IMR-90 (cell line): ENCODE measurements at regions of chr1 and their contacts with region 1.

Region 1: GRCh38 chr1:94463765-94464330 is 45.7 kb downstream of the ABCD3 start:
- DNase-seq: peak; percentile 71
- ATAC-seq: peak; percentile 86
- H3K4me3 ChIP-seq: no peak overlapping the region
- H3K27ac ChIP-seq: no peak overlapping the region
- H3K4me1 ChIP-seq: no peaks in the 10 kb centered on the region; the same call in 1 of the 2 replicates
- H3K27me3 ChIP-seq: no peaks in the 10 kb centered on the region
- CTCF ChIP-seq: peak; percentile 74
- POLR2A ChIP-seq: no peak
- RAD21 ChIP-seq: peak; percentile 85

Region 2: GRCh38 chr1:94025383-94026340 is 438.2 kb before region 1 on chr1:
- CTCF ChIA-PET with region 1: interaction called, 4 read pairs
- POLR2A ChIA-PET with region 1: no interaction called
- dilution Hi-C with region 1: no loop called
- in situ Hi-C with region 1: loop called (anchors 25 kb)
- intact Hi-C with region 1: loop called (anchors 1 kb)
- DNase-seq: peak; percentile 79
- ATAC-seq: peak; percentile 50
- H3K4me3 ChIP-seq: no peak overlapping the region
- H3K27ac ChIP-seq: no peak overlapping the region
- H3K4me1 ChIP-seq: peaks cover 15% of the 10 kb centered on the region
- H3K27me3 ChIP-seq: no peaks in the 10 kb centered on the region
- CTCF ChIP-seq: peak; percentile 83
- POLR2A ChIP-seq: no peak
- RAD21 ChIP-seq: peak; percentile 81

Region 3: DNA sequence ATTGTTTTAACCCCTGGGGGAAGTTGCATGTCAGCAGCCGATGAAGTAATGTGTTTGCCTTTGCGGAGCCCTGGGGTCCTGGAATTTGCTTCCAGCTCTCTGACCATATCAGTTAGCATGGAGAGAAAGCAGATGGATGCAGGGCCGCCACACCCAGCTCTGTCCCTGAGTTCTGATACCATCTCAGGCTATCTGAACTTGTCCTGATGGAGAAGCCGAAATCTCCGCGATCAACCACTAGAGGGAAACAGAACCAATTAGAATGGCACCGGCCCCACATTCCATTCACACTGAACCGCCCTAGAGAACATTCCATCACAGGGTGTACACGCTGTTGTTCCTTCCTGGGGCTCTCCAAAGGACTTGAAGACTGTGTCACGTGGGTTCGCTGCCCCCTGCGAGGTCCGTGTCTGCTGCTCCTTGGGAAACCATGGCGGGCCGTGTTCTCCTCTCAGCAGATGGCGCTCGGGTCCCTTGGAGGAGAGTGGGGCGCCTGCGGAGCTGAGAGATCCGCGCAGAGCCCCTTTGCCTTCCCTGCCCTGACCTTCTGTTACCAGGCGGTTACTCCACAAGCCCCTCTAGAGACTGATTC is 418.3 kb before region 1 on chr1:
- CTCF ChIA-PET with region 1: interaction called, 6 read pairs
- POLR2A ChIA-PET with region 1: no interaction called
- dilution Hi-C with region 1: no loop called
- in situ Hi-C with region 1: loop called (anchors 25 kb)
- intact Hi-C with region 1: no loop called
- DNase-seq: peak; percentile 92
- ATAC-seq: peak; percentile 90
- H3K4me3 ChIP-seq: no peak overlapping the region
- H3K27ac ChIP-seq: peak overlapping the region; percentile 19
- H3K4me1 ChIP-seq: peaks cover 13% of the 10 kb centered on the region; the same call in 1 of the 2 replicates
- H3K27me3 ChIP-seq: no peaks in the 10 kb centered on the region
- CTCF ChIP-seq: peak; percentile 66
- POLR2A ChIP-seq: no peak
- RAD21 ChIP-seq: peak; percentile 49; the same call in 1 of the 2 replicates

Region 4: GRCh38 chr1:94247138-94248094 is 216.4 kb before region 1 on chr1:
- CTCF ChIA-PET with region 1: no interaction called
- POLR2A ChIA-PET with region 1: no interaction called
- dilution Hi-C with region 1: no loop called
- in situ Hi-C with region 1: no loop called
- intact Hi-C with region 1: loop called (anchors 5 kb)
- DNase-seq: peak; percentile 36
- ATAC-seq: peak; percentile 94
- H3K4me3 ChIP-seq: peak overlapping the region; percentile 83
- H3K27ac ChIP-seq: peak overlapping the region; percentile 17; the same call in 1 of the 2 replicates
- H3K4me1 ChIP-seq: no peaks in the 10 kb centered on the region
- H3K27me3 ChIP-seq: no peaks in the 10 kb centered on the region
- CTCF ChIP-seq: no peak
- POLR2A ChIP-seq: no peak
- RAD21 ChIP-seq: 0 out of 2 replicates have a peak, but pooled peaks have one; percentile 1

Region 5: DNA sequence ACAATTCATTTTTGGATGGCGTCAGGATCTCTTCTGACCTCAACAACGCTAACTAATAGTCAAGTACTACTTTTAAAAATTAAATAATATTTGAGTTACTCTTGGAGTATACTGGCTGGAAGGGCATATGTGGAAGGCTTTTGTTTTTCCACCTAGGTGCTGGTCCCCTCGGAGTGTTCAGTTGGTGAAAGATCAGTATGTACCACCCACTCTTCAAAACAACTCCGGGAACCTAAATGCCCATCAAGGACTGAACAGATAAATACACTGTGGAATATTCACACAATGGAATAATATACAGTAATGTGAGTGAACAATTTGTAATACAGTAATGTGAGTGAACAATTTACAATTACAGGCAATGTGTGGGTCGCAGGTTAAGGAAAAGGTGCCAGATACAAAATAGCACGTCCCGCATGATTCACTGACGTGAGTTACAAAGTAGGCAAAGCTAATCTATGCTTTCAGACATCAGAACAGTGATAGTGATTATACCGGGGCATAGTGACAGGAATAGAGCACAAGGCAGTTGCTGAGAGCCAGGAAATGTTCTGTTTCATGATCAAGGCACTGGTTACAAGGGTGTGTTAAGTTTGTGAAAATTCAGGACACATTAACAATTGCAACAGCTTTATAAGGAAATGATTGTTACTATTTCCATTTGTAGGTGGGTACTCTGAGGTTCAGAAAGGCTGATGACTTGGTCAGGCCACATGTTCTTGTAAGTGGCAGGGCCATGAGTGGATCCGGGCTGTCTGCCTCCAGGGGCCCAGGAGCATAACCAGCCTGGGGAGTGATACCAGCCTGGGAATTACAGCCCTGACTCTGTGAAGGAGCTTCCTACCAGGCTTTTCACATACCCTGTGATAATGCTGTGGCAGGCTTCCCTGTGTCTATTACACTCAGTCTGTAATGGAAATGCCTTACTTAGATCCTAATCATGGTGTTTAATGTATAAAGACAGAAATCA is 104.9 kb before region 1 on chr1:
- CTCF ChIA-PET with region 1: no interaction called
- POLR2A ChIA-PET with region 1: no interaction called
- dilution Hi-C with region 1: no loop called
- in situ Hi-C with region 1: no loop called
- intact Hi-C with region 1: loop called (anchors 5 kb)
- DNase-seq: no peak
- ATAC-seq: no peak
- H3K4me3 ChIP-seq: no peak overlapping the region
- H3K27ac ChIP-seq: no peak overlapping the region
- H3K4me1 ChIP-seq: no peaks in the 10 kb centered on the region
- H3K27me3 ChIP-seq: peaks cover 24% of the 10 kb centered on the region
- CTCF ChIP-seq: no peak
- POLR2A ChIP-seq: no peak
- RAD21 ChIP-seq: no peak

Region 6: GRCh38 chr1:94475232-94475631 is 11.4 kb after region 1 on chr1:
- CTCF ChIA-PET with region 1: interaction called, 10 read pairs
- POLR2A ChIA-PET with region 1: no interaction called
- dilution Hi-C with region 1: no loop called
- in situ Hi-C with region 1: no loop called
- intact Hi-C with region 1: no loop called
- DNase-seq: no peak
- ATAC-seq: no peak
- H3K4me3 ChIP-seq: no peak overlapping the region
- H3K27ac ChIP-seq: no peak overlapping the region
- H3K4me1 ChIP-seq: no peaks in the 10 kb centered on the region
- H3K27me3 ChIP-seq: no peaks in the 10 kb centered on the region
- CTCF ChIP-seq: no peak
- POLR2A ChIP-seq: no peak
- RAD21 ChIP-seq: no peak

Region 7: GRCh38 chr1:94658221-94658620 is 194.4 kb after region 1 on chr1:
- CTCF ChIA-PET with region 1: no interaction called
- POLR2A ChIA-PET with region 1: no interaction called
- dilution Hi-C with region 1: no loop called
- in situ Hi-C with region 1: no loop called
- intact Hi-C with region 1: no loop called
- DNase-seq: peak; percentile 79
- ATAC-seq: peak; percentile 56
- H3K4me3 ChIP-seq: no peak overlapping the region
- H3K27ac ChIP-seq: peak overlapping the region; percentile 60
- H3K4me1 ChIP-seq: peaks cover 22% of the 10 kb centered on the region
- H3K27me3 ChIP-seq: no peaks in the 10 kb centered on the region
- CTCF ChIP-seq: no peak
- POLR2A ChIP-seq: no peak
- RAD21 ChIP-seq: no peak